ENCODE measurements at regions of chr3 and their contacts with region 1.

Region 1: GRCh38 chr3:183515968-183516851 is 39.3 kb downstream of the KLHL6 start:
- DNase-seq: peak; percentile 59
- H3K4me3 Mint-ChIP-seq: no peak overlapping the region
- H3K27ac Mint-ChIP-seq: peak overlapping the region; percentile 90
- H3K4me1 Mint-ChIP-seq: peaks cover 66% of the 10 kb centered on the region
- H3K27me3 Mint-ChIP-seq: no peaks in the 10 kb centered on the region

Region 2: GRCh38 chr3:182521339-182521738 is 994.9 kb before region 1 on chr3:
- intact Hi-C with region 1: no loop called
- DNase-seq: no peak
- H3K4me3 Mint-ChIP-seq: no peak overlapping the region
- H3K27ac Mint-ChIP-seq: no peak overlapping the region
- H3K4me1 Mint-ChIP-seq: no peaks in the 10 kb centered on the region
- H3K27me3 Mint-ChIP-seq: no peaks in the 10 kb centered on the region

Region 3: GRCh38 chr3:183527428-183528379 is 11.5 kb after region 1 on chr3:
- intact Hi-C with region 1: loop called (anchors 1 kb)
- DNase-seq: no peak
- H3K4me3 Mint-ChIP-seq: peak overlapping the region; percentile 31
- H3K27ac Mint-ChIP-seq: peak overlapping the region; percentile 64
- H3K4me1 Mint-ChIP-seq: peaks cover 42% of the 10 kb centered on the region
- H3K27me3 Mint-ChIP-seq: no peaks in the 10 kb centered on the region

Measured in activated T-helper 2 cell treated with anti-CD3 and anti-CD28 coated beads, Interferon-gamma antibody, Interleukin-2, Interleukin-4, amounts not matched to agents 10 μg/mL and 5 μg/mL and 100 μg/mL, durations not matched to agents 14 hours and 24 hours and 36 hours (primary cell).